ENCODE measurements at regions of chr20 and their contacts with region 1.

Region 1: DNA sequence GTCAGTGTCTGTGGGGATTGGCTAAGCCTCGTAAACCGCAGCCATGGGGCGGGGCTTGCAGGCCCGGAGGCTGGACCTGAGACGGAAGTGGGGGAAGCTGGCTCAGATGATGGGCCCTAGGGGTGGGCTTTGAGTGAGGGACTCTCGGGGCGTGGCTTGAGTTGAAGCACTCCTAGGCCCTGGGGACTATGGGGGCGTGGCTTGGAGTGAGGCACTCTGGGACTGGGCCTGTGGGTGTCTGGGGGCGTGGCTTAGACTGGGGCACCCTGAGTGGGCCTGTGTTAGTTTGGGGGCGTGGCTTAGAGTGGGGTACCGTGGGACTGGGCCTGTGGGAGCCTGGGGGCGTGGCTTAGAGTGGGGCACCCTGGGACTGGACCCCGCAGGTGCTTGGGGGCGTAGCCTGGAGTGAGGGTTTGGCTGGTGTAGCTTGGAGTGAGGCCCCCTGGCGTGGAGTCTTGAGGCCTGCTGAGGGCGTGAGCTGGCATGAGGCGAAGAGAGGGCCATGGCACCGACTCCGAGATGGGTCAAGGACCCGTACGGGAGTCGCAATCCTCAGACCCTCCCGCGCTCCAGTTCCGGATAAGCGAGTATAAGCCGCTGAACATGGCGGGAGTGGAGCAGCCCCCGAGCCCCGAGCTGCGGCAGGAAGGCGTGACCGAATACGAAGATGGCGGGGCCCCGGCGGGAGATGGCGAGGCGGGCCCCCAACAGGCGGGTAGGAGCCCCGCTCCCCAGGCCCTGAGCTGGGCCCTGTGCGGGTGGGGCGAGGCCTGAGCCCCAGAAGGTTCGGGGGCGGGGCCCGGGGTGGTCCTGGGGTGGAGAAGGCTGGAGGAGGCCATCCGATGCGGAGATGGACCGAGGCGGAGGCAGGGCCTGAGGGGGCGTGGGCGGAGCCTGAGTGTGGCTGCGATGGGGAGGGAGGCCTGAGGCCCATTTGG is 6.8 kb downstream of the L3MBTL1 start:
- DNase-seq: peak; percentile 95
- ATAC-seq: peak; percentile 88
- H3K4me3 ChIP-seq: peak overlapping the region; percentile 44 to 71 (median 62)
- H3K4me3 Mint-ChIP-seq: peak overlapping the region; percentile 94
- H3K27ac ChIP-seq: peak overlapping the region; percentile 52 to 63
- H3K27ac Mint-ChIP-seq: peak overlapping the region; percentile 94
- H3K4me1 ChIP-seq: peaks cover 9 to 16% of the 10 kb centered on the region in 2 donors
- H3K4me1 Mint-ChIP-seq: peaks cover 24% of the 10 kb centered on the region
- H3K27me3 ChIP-seq: peaks cover 0 to 6% (median 2%) of the 10 kb centered on the region in 4 experiments
- H3K27me3 Mint-ChIP-seq: peaks cover 3% of the 10 kb centered on the region
- CTCF ChIP-seq: peak; percentile 34

Region 2: GRCh38 chr20:43530321-43531090 is 16.2 kb after region 1 on chr20:
- CTCF ChIA-PET with region 1: no interaction called
- POLR2A ChIA-PET with region 1: no interaction called
- intact Hi-C with region 1: no loop called
- DNase-seq: no peak
- ATAC-seq: no peak
- H3K4me3 ChIP-seq: no peak overlapping the region
- H3K4me3 Mint-ChIP-seq: no peak overlapping the region
- H3K27ac ChIP-seq: no peak overlapping the region
- H3K27ac Mint-ChIP-seq: no peak overlapping the region
- H3K4me1 ChIP-seq: no peaks in the 10 kb centered on the region
- H3K4me1 Mint-ChIP-seq: no peaks in the 10 kb centered on the region
- H3K27me3 ChIP-seq: no peaks in the 10 kb centered on the region
- H3K27me3 Mint-ChIP-seq: no peaks in the 10 kb centered on the region
- CTCF ChIP-seq: no peak

Region 3: DNA sequence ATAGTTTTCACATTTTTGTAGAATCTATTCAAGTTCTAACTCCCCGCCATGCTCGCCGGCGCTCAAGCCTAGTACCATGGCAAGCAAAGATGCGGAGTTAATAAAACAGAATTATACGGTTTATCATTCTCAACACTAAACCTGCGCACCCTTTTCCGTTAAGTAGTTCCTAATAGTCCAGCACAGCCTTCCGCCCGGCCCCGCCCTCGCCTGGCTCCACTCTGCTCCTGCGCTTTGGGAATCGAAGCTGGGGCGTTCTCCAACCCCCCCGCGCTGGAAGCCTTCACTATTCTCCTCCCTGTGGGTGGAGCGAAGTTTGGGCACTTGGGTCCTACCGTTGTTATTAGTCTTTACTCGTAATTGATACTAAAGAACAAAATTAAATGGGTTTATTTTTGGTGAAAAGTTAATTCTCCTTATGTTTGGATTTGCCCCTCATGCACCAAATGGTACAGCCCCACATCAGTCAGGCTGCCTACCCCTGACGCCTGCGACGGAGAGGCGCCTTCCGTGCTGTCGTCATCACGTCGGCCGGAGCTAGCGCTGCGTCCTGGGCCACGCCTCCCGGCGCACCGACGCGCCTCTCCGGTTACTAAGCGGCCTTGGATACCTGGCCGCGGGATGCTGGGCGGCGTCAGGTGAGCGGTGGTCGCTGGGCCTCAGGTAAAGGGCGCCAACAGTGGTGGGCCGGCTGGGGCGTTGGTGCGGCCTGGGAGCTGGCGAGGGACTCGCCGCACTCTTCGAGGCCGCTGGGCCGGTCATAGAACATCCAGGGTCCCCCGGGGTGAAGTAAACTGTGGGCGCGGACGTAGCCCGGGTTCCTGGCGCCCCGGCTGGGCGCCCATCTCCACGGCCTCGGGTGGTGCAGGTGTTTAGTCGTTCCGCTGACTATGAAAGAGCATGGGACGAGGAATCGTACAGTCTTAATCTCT is 76.3 kb after region 1 on chr20 and contains the start of gene IFT52:
- CTCF ChIA-PET with region 1: no interaction called
- POLR2A ChIA-PET with region 1: interaction called, 7 read pairs
- intact Hi-C with region 1: loop called (anchors 1 kb)
- DNase-seq: peak; percentile 94
- ATAC-seq: peak; percentile 97
- H3K4me3 ChIP-seq: peak within 1 kb of the TSS; percentile 67 to 80 (median 75)
- H3K4me3 Mint-ChIP-seq: peak within 1 kb of the TSS; percentile 93
- H3K27ac ChIP-seq: peak within 1 kb of the TSS; percentile 66 to 92
- H3K27ac Mint-ChIP-seq: peak within 1 kb of the TSS; percentile 95
- H3K4me1 ChIP-seq: peaks cover 9 to 15% of the 10 kb centered on the region in 2 donors
- H3K4me1 Mint-ChIP-seq: peaks cover 18% of the 10 kb centered on the region
- H3K27me3 ChIP-seq: no peaks in the 10 kb centered on the region
- H3K27me3 Mint-ChIP-seq: peaks cover 5% of the 10 kb centered on the region
- CTCF ChIP-seq: no peak
- total RNA-seq, gene IFT52: 16.7 and 23.7 TPM in 2 replicates

Region 4: GRCh38 chr20:43658069-43658722 is 143.9 kb after region 1 on chr20:
- CTCF ChIA-PET with region 1: no interaction called
- POLR2A ChIA-PET with region 1: interaction called, 12 read pairs
- intact Hi-C with region 1: no loop called
- DNase-seq: no peak
- ATAC-seq: no peak
- H3K4me3 ChIP-seq: peak overlapping the region; percentile 71 to 87 (median 74)
- H3K4me3 Mint-ChIP-seq: peak overlapping the region; percentile 96
- H3K27ac ChIP-seq: peak overlapping the region; percentile 97 to 100
- H3K27ac Mint-ChIP-seq: peak overlapping the region; percentile 97
- H3K4me1 ChIP-seq: peaks cover 5 to 11% of the 10 kb centered on the region in 2 donors
- H3K4me1 Mint-ChIP-seq: peaks cover 13% of the 10 kb centered on the region
- H3K27me3 ChIP-seq: no peaks in the 10 kb centered on the region
- H3K27me3 Mint-ChIP-seq: no peaks in the 10 kb centered on the region
- CTCF ChIP-seq: no peak

Region 5: DNA sequence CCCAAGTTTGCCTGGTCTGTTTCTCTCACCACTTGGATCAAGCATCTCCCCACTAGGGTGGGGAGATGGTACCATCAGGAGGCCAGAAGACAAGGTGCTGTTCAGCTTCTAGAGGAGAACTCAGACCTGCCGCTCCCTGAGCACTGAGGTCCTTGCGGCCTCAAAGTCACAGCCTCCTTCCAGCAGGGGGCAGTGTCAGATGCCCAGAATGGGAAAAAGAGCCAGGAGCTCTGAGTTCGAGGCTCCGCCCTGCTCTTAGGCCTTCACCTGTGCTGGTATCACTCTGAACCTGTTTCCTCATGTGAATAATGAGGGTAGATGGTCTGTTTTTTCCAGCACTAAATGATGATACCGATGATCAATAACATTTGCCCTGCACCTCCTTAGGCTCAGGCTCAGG is 469.0 kb after region 1 on chr20:
- CTCF ChIA-PET with region 1: no interaction called
- POLR2A ChIA-PET with region 1: no interaction called
- intact Hi-C with region 1: no loop called
- DNase-seq: no peak
- ATAC-seq: no peak
- H3K4me3 ChIP-seq: no peak overlapping the region
- H3K4me3 Mint-ChIP-seq: no peak overlapping the region
- H3K27ac ChIP-seq: no peak overlapping the region
- H3K27ac Mint-ChIP-seq: no peak overlapping the region
- H3K4me1 ChIP-seq: no peaks in the 10 kb centered on the region
- H3K4me1 Mint-ChIP-seq: no peaks in the 10 kb centered on the region
- H3K27me3 ChIP-seq: no peaks in the 10 kb centered on the region
- H3K27me3 Mint-ChIP-seq: peaks cover 10% of the 10 kb centered on the region
- CTCF ChIP-seq: no peak

Measured in B cell (primary cell).